ENCODE measurements at regions of chr1 and their contacts with region 1.

Region 1: GRCh38 chr1:62561306-62561705 is 36.0 kb upstream of the ANGPTL3 start:
- DNase-seq: no peak
- ATAC-seq: no peak
- H3K4me3 ChIP-seq: no peak overlapping the region
- H3K27ac ChIP-seq: no peak overlapping the region
- H3K4me1 ChIP-seq: peaks cover 24% of the 10 kb centered on the region
- H3K27me3 ChIP-seq: no peaks in the 10 kb centered on the region
- CTCF ChIP-seq: no peak
- EP300 ChIP-seq: no peak
- POLR2A ChIP-seq: no peak
- RAD21 ChIP-seq: no peak

Region 2: DNA sequence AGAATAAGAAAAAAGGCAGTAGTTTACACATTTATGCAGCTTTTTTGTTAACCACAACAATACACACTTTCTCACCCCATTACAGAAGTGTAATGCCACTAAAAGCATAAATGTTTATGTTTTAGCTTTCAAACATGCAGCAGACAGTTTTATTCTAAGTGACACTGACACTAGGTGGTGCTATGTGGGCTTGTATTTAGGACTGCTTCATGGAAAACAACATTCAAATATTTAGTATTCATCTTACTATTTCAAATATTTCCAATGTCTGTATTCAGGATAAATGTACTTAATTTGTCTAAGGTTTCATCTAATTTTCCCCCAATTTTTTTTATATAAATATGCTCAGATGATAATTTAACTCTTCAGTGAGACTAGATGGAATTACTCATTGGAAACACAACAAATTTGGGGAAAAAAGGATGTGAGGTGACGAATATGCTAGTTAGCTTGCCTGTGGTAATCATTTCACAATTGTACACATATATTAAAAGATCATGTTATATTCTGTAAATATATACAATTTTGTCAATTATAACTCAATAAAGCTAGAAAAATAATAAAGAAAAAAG is 53.0 kb before region 1 on chr1:
- CTCF ChIA-PET with region 1: no interaction called
- POLR2A ChIA-PET with region 1: no interaction called
- in situ Hi-C with region 1: no loop called
- intact Hi-C with region 1: no loop called
- DNase-seq: peak; percentile 48
- ATAC-seq: no peak
- H3K4me3 ChIP-seq: no peak overlapping the region
- H3K27ac ChIP-seq: no peak overlapping the region
- H3K4me1 ChIP-seq: peaks cover 8% of the 10 kb centered on the region; the same call in 1 of the 2 replicates
- H3K27me3 ChIP-seq: no peaks in the 10 kb centered on the region
- CTCF ChIP-seq: peak; percentile 69
- EP300 ChIP-seq: no peak
- POLR2A ChIP-seq: no peak
- RAD21 ChIP-seq: peak; percentile 54

Region 3: GRCh38 chr1:62528015-62528414 is 33.3 kb before region 1 on chr1:
- CTCF ChIA-PET with region 1: no interaction called
- POLR2A ChIA-PET with region 1: no interaction called
- in situ Hi-C with region 1: no loop called
- intact Hi-C with region 1: no loop called
- DNase-seq: no peak
- ATAC-seq: no peak
- H3K4me3 ChIP-seq: no peak overlapping the region
- H3K27ac ChIP-seq: no peak overlapping the region
- H3K4me1 ChIP-seq: peaks cover 37% of the 10 kb centered on the region
- H3K27me3 ChIP-seq: no peaks in the 10 kb centered on the region
- CTCF ChIP-seq: no peak
- EP300 ChIP-seq: no peak
- POLR2A ChIP-seq: no peak
- RAD21 ChIP-seq: no peak

Region 4: GRCh38 chr1:62613890-62614289 is 52.6 kb after region 1 on chr1:
- CTCF ChIA-PET with region 1: no interaction called
- POLR2A ChIA-PET with region 1: no interaction called
- in situ Hi-C with region 1: no loop called
- intact Hi-C with region 1: loop called (anchors 2 kb)
- DNase-seq: peak; percentile 45
- ATAC-seq: no peak
- H3K4me3 ChIP-seq: no peak overlapping the region
- H3K27ac ChIP-seq: no peak overlapping the region
- H3K4me1 ChIP-seq: peaks cover 29% of the 10 kb centered on the region
- H3K27me3 ChIP-seq: no peaks in the 10 kb centered on the region
- CTCF ChIP-seq: no peak
- EP300 ChIP-seq: no peak
- POLR2A ChIP-seq: no peak
- RAD21 ChIP-seq: no peak

Measured in HepG2 (cell line).